ENCODE measurements at regions of chr17 and their contacts with region 1.

Region 1: DNA sequence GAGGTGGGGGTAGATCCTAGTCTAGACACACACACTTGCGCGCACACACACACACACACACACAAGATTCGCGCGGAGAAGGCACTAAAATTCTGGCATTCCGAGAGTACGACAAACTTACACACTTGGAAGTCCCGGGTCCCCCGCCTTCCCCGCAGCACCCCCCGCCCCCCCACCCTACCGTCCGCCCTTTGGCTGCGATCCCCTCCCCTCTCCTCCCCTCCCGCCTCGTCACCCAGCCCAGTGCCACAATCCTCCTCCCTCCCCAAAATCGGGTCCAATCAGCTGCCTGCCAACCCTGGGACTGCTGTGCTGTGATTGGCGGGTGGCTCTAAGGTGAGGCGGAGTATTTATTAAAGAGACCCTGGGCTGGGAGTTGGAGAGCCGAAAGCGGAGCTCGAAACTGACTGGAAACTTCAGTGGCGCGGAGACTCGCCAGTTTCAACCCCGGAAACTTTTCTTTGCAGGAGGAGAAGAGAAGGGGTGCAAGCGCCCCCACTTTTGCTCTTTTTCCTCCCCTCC is at the start of gene SOX9:
- DNase-seq: peak; percentile 70 to 96 (median 94)
- H3K4me3 ChIP-seq: peak within 1 kb of the TSS; percentile 47 to 91 (median 79)
- H3K27ac ChIP-seq: peak within 1 kb of the TSS; percentile 49 to 95 (median 88)
- H3K27me3 ChIP-seq: peaks cover 0 to 60% (median 6%) of the 10 kb centered on the region in 45 donors
- CTCF ChIP-seq: no peak
- total RNA-seq, gene SOX9: 30.6 to 138 (median 57.7) TPM

Region 2: GRCh38 chr17:70636517-70637133 is 1484.1 kb before region 1 on chr17:
- intact Hi-C with region 1: loop called (anchors 10 kb)
- DNase-seq: no peak
- H3K4me3 ChIP-seq: peak overlapping the region in 1 of 59 donors; percentile 22
- H3K27ac ChIP-seq: peak overlapping the region in 5 of 59 donors; percentile 2 to 28 (median 13)
- H3K27me3 ChIP-seq: no peaks in the 10 kb centered on the region
- CTCF ChIP-seq: peak; percentile 80 to 99 (median 93)

Region 3: DNA sequence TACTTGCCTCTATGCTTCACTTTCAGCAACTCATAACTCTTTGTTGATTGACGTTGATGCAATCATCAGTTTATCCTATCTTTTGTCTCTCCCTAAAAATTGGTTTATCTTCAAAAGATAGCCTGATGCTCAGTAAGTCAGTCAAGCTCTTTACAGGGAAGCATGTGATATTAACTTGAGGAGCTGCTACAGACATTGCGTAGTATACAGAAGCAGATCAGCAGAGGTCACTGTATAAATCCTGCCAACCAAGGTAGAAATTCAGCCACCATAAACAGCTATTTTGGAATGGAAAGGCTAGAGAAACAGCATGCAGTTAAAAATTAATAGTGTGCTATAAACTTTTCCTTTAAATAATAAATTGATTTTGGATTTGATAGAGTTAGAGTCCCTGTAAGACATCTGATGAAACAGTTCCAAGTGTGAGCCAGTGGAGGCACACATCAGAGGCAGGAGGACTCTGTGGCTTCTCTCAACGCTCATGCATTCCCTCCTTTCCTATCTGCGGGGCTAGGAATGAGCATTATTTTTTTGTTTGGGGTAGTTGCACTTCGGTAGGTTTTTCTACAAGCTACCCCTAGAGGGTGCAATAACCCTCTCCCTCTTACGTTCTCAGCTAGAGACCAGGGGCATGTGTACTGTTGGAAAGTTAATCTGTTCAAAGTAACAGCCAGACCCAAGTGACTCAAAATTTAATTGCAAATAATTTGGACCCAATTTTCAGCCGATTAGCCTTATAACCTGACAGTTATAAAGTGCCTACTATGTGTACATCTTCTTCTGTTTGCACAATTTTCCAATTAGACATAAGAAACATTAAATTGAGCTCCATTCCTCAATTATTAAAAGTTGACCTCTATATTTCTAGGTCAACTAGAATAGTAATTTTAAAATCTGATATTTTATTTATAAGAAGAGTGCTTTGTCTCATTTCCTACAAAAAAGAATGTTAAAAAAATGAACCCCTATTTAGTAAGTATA is 647.6 kb before region 1 on chr17:
- intact Hi-C with region 1: loop called (anchors 5 to 10 kb)
- DNase-seq: no peak
- H3K4me3 ChIP-seq: peak overlapping the region in 3 of 59 donors; percentile 9 to 22 (median 13)
- H3K27ac ChIP-seq: no peak overlapping the region
- H3K27me3 ChIP-seq: no peaks in the 10 kb centered on the region
- CTCF ChIP-seq: peak in 55 of 56 donors; percentile 26 to 82 (median 64)

Region 4: DNA sequence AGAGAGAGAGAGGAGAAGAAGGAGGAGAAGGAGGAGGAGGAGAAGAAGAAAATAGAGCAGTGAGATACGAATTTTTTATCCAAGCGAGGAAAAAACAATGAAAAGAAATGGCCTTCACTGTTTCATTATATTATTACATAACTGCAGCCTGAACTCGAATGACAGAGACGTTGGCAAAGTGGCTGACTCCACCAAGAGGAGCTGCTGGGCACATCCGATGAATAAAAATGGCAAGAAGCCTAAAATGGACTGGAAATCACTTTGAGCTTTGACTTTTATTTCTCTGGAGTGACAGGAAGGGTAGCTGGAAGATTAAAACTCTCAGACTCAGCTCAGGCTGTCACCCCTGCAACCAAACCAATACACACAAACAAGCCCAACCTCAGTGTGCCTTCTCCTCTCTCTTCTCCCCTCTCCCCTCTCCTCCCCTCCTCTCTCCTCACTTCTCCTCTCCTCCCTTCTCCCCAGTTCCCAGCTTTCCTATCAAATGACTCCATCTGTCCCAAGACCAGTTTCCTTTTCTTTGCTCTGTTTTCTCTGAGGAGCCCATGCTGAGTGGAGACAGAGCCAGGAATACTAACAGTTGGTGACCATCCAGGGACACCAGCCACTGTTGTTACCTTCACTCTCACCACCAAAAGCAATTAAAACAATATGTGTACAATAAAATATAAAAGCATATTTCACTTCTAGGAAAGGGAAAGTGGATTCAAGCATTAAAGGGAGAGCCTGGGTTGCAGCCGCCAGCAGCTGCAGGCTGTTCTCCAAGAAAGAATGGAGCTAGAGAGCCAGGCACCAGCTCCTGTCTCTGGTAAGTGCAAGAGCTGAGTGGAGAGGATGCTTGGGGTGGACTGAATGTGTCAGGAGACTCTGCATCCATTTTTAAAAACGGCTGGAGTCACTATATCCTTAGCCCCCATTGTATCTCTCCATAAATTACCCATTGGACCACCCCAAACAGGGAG is 51.3 kb after region 1 on chr17:
- intact Hi-C with region 1: loop called (anchors 5 kb)
- DNase-seq: peak in 4 of 10 donors; percentile 32 to 67 (median 52)
- H3K4me3 ChIP-seq: peak overlapping the region in 18 of 59 donors; percentile 0 to 44 (median 11)
- H3K27ac ChIP-seq: peak overlapping the region in 56 of 59 donors; percentile 2 to 80 (median 57)
- H3K27me3 ChIP-seq: no peaks in the 10 kb centered on the region
- CTCF ChIP-seq: peak in 51 of 56 donors; percentile 8 to 66 (median 39)

Region 5: GRCh38 chr17:72539981-72540897 is 419.5 kb after region 1 on chr17:
- intact Hi-C with region 1: loop called (anchors 2 to 10 kb)
- DNase-seq: peak; percentile 49 to 91 (median 68)
- H3K4me3 ChIP-seq: peak overlapping the region in 48 of 59 donors; percentile 4 to 60 (median 38)
- H3K27ac ChIP-seq: peak overlapping the region in 55 of 59 donors; percentile 10 to 89 (median 75)
- H3K27me3 ChIP-seq: peaks cover 0 to 4% (median 0%) of the 10 kb centered on the region in 45 donors
- CTCF ChIP-seq: peak; percentile 45 to 97 (median 85)